Panc1 (cell line): ENCODE measurements at regions of chr7 and their contacts with region 1.

Region 1: DNA sequence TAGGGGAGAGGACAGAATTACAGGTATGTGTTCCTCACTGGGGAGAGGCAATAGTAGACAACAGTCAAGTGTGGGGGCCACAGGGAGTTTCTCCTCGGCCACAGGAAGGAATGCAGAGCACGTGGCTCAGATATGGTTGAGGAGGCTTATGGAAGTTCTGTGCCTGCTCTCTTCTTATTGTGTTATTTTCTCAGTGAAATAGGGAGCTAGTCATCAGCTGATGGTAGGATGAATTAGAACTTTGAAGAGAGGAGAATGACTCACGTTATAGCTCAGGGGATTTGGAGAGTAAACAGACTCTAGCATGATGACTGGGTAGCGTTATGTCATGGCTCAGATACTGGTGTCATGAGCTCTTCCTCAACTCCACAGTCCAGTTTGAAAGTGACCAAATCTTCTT is 308.3 kb upstream of the IGFBP3 start:
- DNase-seq: peak; percentile 43
- ATAC-seq: no peak
- H3K4me3 ChIP-seq: no peak overlapping the region
- H3K27ac ChIP-seq: no peak overlapping the region
- H3K4me1 ChIP-seq: no peaks in the 10 kb centered on the region
- H3K27me3 ChIP-seq: no peaks in the 10 kb centered on the region
- CTCF ChIP-seq: no peak

Region 2: GRCh38 chr7:46279290-46279689 is 49.9 kb after region 1 on chr7:
- CTCF ChIA-PET with region 1: no interaction called
- POLR2A ChIA-PET with region 1: no interaction called
- in situ Hi-C with region 1: loop called (anchors 5 kb)
- intact Hi-C with region 1: no loop called
- DNase-seq: no peak
- ATAC-seq: no peak
- H3K4me3 ChIP-seq: no peak overlapping the region
- H3K27ac ChIP-seq: no peak overlapping the region
- H3K4me1 ChIP-seq: no peaks in the 10 kb centered on the region
- H3K27me3 ChIP-seq: no peaks in the 10 kb centered on the region
- CTCF ChIP-seq: no peak

Region 3: DNA sequence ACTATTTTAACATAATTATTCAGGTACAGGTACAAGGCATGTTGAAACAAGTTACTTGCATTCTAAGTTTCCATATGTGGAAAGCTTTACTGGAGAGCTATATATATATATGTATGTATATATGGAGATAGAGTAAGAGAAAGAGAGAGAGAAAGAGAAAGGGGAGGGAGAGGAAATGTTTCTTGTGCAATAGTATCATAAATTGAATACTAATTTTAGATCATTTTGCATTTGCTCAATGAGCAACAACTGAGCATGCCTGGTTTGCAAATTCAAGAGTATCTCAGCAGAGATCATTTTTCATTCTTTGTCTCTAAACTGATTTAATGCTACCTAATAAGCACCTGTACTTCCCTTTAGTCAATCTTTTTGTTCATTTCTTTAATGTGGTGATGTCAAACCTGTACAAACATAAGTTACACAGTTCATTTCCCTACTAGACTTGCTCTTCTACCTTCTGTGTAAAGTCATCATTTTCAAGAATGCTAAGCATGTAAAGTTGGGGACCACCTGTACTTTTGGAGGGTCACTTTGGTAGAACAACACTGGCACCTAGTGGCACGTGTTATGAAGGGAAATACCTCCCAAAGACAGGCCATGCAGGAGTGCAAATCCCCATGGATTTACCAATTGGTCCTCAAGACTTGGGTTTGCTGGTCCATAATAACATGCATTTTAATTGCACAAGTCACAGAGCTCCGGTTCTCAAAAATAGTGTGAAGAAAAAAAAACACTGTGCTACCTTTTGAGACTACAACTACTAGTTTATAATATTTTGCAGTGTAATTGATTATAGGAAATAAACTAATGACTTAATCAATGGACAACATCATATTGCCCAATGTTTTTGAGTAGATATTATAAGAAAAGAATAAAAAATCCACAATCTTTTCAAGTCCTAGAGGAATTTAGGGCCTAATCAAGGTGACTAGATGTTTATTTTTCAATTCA is 122.9 kb after region 1 on chr7:
- CTCF ChIA-PET with region 1: no interaction called
- POLR2A ChIA-PET with region 1: no interaction called
- in situ Hi-C with region 1: no loop called
- intact Hi-C with region 1: no loop called
- DNase-seq: peak; percentile 43
- ATAC-seq: peak; percentile 93
- H3K4me3 ChIP-seq: no peak overlapping the region
- H3K27ac ChIP-seq: no peak overlapping the region
- H3K4me1 ChIP-seq: no peaks in the 10 kb centered on the region
- H3K27me3 ChIP-seq: no peaks in the 10 kb centered on the region
- CTCF ChIP-seq: peak; percentile 75